ENCODE measurements at regions of chr10 and their contacts with region 1.

Region 1: DNA sequence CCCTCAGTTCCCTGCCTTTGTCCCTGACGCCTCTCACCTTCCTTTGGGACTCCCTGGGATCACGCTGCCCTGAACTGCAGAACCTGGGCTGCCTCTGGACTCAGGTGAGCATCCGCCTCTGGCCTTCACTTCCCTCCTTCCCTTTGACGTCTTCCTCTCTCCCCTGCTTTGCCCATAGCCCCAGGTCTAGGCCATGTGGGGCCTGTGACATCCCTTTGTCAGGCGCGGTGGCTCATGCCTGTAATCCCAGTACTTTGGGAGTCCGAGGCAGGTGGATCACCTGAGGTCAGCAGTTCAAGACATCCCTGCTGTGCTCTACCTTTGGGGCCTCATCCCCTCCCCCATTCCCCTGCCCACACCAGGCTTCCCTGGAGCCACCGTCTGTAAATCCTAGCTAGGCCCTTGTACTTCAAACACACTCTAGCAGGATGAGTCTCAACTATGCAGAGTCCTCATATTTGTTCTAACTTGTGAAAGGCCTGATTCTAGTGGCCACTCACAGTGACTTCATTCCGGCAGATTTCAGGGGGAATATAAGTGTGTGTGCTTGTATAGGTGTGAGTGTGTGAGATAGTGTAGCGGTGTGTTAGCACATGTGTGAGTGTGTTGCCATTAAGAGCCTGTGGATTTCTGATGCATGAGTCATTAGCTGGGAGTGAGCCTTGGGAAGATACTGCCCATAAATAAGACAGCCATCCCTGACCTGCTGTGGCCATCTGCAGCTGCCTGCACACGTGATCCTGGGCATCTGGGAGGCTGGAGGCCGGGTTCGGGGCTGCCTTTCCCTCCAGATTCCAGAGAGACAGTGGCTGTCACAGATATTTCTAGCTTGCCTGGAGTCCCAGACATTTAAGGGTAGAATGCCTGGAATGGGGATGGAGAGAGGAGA is 1.8 kb upstream of the NEURL1 start:
- DNase-seq: no peak
- H3K4me3 Mint-ChIP-seq: peak overlapping the region; percentile 51
- H3K27ac Mint-ChIP-seq: peak overlapping the region; percentile 42
- H3K4me1 Mint-ChIP-seq: peaks cover 33% of the 10 kb centered on the region
- H3K27me3 Mint-ChIP-seq: peaks cover 43% of the 10 kb centered on the region

Region 2: DNA sequence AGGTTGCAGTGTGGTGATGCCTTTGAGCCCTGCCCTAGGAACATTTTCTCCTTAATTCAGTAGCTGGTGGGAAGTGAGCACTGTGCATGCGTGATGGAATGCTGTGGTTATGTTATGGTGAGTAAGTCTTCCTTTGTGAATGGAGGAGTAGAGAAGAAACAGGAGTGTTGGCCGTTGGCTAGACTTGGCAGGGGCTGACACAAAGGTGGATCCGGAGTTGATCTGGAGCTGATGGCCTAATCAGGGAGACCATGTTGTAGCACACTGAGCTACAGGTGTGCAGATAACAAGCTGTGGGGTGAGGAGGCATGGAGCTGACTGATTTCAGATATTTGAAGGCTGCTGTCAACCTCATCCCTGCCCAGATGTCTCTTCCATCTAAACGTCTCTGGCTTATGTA is 451.3 kb before region 1 on chr10:
- intact Hi-C with region 1: no loop called
- DNase-seq: no peak
- H3K4me3 Mint-ChIP-seq: no peak overlapping the region
- H3K27ac Mint-ChIP-seq: no peak overlapping the region
- H3K4me1 Mint-ChIP-seq: no peaks in the 10 kb centered on the region
- H3K27me3 Mint-ChIP-seq: peaks cover 2% of the 10 kb centered on the region

Region 3: GRCh38 chr10:103504181-103504783 is 12.5 kb after region 1 on chr10:
- intact Hi-C with region 1: loop called (anchors 1 kb)
- DNase-seq: peak; percentile 56
- H3K4me3 Mint-ChIP-seq: peak overlapping the region; percentile 40
- H3K27ac Mint-ChIP-seq: peak overlapping the region; percentile 77
- H3K4me1 Mint-ChIP-seq: peaks cover 53% of the 10 kb centered on the region
- H3K27me3 Mint-ChIP-seq: peaks cover 36% of the 10 kb centered on the region

Region 4: DNA sequence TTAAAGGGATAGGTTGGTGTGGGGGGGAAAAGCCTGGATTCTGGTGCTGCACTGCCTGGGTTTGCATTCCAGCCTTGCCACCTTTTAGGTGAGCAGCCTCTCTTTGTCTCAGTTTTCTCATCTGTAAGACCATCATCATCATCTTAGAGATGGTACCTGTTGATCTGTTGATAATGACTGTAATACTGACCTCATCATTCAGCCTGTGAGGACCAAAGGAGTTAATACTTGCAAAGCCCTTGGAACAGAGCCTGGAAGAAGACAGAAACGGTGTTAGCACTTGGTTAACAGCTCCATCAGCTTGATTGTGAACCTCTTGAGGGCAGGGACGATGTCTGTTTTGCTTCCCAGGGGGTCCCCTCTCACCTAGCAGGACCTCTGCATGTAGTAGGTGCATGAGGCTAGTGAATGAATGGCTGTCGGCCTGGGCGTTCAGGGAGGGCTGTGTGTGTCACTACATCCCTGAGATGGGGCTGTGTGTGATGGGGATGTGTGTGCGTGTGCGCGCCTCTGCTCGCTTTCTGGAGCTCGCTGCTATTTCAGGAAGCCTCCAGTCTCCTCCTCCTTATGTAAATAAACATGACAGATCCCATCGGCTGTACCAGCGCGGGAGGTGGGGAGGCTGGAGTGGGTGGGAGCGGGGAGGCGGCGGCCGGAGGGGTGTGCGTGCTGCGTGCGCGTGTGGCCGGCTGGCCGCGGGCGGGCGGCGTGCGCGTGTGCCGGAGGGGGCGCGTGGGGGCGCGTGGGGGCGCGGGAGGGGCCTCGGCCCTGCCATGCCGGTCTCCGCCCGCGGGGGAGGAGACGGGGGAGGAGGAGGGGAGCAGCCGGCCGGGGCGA is 63.0 kb after region 1 on chr10:
- intact Hi-C with region 1: loop called (anchors 2 kb)
- DNase-seq: peak; percentile 16
- H3K4me3 Mint-ChIP-seq: peak overlapping the region; percentile 72
- H3K27ac Mint-ChIP-seq: no peak overlapping the region
- H3K4me1 Mint-ChIP-seq: peaks cover 19% of the 10 kb centered on the region
- H3K27me3 Mint-ChIP-seq: peaks cover 16% of the 10 kb centered on the region

Region 5: GRCh38 chr10:103584216-103585010 is 92.7 kb after region 1 on chr10:
- intact Hi-C with region 1: loop called (anchors 2 kb)
- DNase-seq: peak; percentile 52
- H3K4me3 Mint-ChIP-seq: peak overlapping the region; percentile 87
- H3K27ac Mint-ChIP-seq: peak overlapping the region; percentile 83
- H3K4me1 Mint-ChIP-seq: peaks cover 13% of the 10 kb centered on the region
- H3K27me3 Mint-ChIP-seq: peaks cover 8% of the 10 kb centered on the region